ENCODE measurements at regions of chr1 and their contacts with region 1.

Region 1: GRCh38 chr1:27111626-27112573 is 43.0 kb downstream of the SLC9A1 start:
- DNase-seq: peak; percentile 77
- H3K4me3 ChIP-seq: no peak overlapping the region
- H3K27ac ChIP-seq: peak overlapping the region; percentile 24
- H3K4me1 ChIP-seq: peaks cover 28% of the 10 kb centered on the region
- H3K27me3 ChIP-seq: no peaks in the 10 kb centered on the region
- CTCF ChIP-seq: peak; percentile 35

Region 2: DNA sequence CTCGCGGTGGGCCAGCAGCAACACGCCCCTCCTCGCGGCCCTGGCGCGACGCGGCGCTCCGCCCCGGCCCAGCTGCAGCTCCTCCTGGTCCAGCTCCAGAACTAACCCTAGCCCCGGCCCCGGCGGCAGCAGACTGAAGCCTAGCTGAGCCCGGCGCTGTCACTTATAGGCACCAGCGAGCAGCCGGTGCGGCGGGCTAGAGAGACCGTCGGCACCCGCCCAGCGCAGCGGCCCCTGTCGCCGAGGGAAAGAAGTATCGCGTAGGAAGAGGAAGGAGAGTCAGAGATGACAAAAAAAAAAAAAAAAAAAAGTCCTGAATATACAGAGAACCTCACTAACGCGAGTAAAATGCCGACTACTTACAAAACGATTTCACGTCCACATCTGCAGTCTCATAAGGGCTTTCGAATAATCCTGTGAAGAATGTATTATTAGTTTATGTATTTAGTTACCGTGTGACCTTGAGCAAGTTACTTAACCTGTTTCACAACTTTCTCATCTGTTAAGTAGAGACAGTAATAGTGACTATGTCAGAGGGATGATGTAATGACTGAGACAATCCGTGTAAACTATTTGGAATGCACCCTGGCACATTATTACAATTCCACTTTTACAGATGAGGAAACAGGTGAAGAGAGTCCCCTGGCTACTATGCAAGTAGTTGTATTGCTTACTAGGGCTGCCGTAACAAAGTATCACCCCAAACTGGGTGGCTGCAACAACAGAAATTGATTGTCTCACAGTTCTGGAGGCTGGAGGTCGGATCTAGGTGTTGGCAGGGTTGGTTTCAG is 43.3 kb after region 1 on chr1 and contains the start of gene SLC9A1:
- intact Hi-C with region 1: loop called (anchors 5 kb)
- DNase-seq: peak; percentile 96
- H3K4me3 ChIP-seq: peak within 1 kb of the TSS; percentile 83
- H3K27ac ChIP-seq: peak within 1 kb of the TSS; percentile 65
- H3K4me1 ChIP-seq: peaks cover 29% of the 10 kb centered on the region
- H3K27me3 ChIP-seq: no peaks in the 10 kb centered on the region
- CTCF ChIP-seq: peak; percentile 76
- total RNA-seq, gene SLC9A1: 63.6 to 99.6 TPM